A673 (cell line): ENCODE measurements at regions of chr6 and their contacts with region 1.

Region 1: GRCh38 chr6:32838114-32838958 is at the start of gene TAP2:
- DNase-seq: peak; percentile 93
- H3K4me3 ChIP-seq: peak within 1 kb of the TSS; percentile 88
- H3K27ac ChIP-seq: peak within 1 kb of the TSS; percentile 91
- H3K4me1 ChIP-seq: peaks cover 9% of the 10 kb centered on the region
- H3K27me3 ChIP-seq: no peaks in the 10 kb centered on the region
- CTCF ChIP-seq: peak; percentile 98
- total RNA-seq, gene TAP2: 39.2 and 46.5 TPM in 2 replicates

Region 2: GRCh38 chr6:32825966-32826365 is 12.4 kb before region 1 on chr6:
- CTCF ChIA-PET with region 1: interaction called, 10 read pairs
- POLR2A ChIA-PET with region 1: no interaction called
- intact Hi-C with region 1: no loop called
- DNase-seq: peak; percentile 40
- H3K4me3 ChIP-seq: no peak overlapping the region
- H3K27ac ChIP-seq: no peak overlapping the region
- H3K4me1 ChIP-seq: no peaks in the 10 kb centered on the region
- H3K27me3 ChIP-seq: no peaks in the 10 kb centered on the region
- CTCF ChIP-seq: peak; percentile 49

Region 3: GRCh38 chr6:32853541-32854375 is 15.4 kb after region 1 on chr6 and contains the starts of genes PSMB9 and TAP1:
- CTCF ChIA-PET with region 1: interaction called, 56 read pairs
- POLR2A ChIA-PET with region 1: no interaction called
- intact Hi-C with region 1: loop called (anchors 1 kb)
- DNase-seq: peak; percentile 96
- H3K4me3 ChIP-seq: peak within 1 kb of the TSS; percentile 93
- H3K27ac ChIP-seq: peak within 1 kb of the TSS; percentile 77
- H3K4me1 ChIP-seq: no peaks in the 10 kb centered on the region
- H3K27me3 ChIP-seq: peaks cover 27% of the 10 kb centered on the region
- CTCF ChIP-seq: peak; percentile 90
- total RNA-seq, gene PSMB9: 4.3 and 6.8 TPM in 2 replicates
- total RNA-seq, gene TAP1: 11.7 and 12.3 TPM in 2 replicates

Region 4: DNA sequence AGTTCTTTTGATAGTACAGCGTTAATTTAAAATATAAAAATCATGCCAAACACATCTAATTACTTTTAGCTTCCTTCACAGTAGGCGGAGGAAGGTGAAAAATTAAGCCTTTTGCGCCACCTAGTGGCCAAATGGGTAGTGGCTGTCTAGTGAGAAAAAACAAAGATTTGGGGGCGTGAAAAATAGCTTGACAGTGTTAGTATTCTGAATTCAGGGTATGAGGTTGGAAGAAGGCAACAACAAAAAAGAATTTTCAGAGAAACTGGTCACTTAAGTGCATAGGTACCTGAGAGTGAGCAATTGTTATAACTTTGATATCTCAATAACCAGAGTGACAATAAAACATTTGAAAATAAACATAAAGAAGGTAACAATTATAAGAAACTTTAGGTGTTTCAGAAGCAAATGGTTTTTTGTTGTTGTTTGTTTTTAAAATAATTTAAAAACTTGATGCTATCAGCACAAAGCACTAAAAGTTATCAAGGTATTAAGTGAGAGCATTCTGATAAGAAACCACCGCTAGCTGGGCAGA is 30.0 kb after region 1 on chr6:
- CTCF ChIA-PET with region 1: interaction called, 48 read pairs
- POLR2A ChIA-PET with region 1: no interaction called
- intact Hi-C with region 1: loop called (anchors 1 kb)
- DNase-seq: peak; percentile 84
- H3K4me3 ChIP-seq: no peak overlapping the region
- H3K27ac ChIP-seq: no peak overlapping the region
- H3K4me1 ChIP-seq: no peaks in the 10 kb centered on the region
- H3K27me3 ChIP-seq: peaks cover 50% of the 10 kb centered on the region
- CTCF ChIP-seq: peak; percentile 91